Heart left ventricle (tissue), 16 donors: ENCODE measurements at regions of chr12 and their contacts with region 1.

Region 1: DNA sequence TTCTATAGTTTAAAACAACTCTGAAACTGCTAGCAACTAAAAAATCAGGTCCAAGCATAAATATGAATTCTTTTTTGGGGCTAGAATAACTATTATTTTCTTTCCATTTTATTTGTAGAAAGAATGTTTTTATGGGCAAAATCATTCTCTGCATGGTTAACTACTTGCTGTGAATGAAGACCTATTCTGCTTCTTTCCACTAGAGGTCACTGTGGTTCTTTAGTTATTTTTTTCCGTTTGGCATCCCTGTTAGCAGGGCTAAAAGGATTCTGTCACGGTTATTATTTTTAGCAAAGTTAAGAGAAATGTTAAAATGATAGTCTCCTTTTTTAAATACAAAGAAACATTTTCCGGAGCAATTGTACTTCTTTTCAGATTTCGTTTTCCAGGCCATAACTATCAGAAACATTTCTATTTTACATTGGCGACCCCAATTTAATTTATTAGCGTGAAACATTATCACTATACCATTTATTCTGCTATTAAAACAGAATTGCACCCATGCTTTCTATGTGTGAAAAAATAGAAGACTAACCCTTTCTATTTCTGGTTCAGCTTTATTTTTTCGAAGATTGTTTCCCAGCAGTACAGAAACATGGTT is 404.8 kb downstream of the ATP23 start:
- DNase-seq: no peak
- ATAC-seq: peak in 1 of 4 donors; percentile 62
- H3K4me3 ChIP-seq: no peak overlapping the region
- H3K27ac ChIP-seq: no peak overlapping the region
- H3K4me1 ChIP-seq: peaks cover 0 to 5% (median 0%) of the 10 kb centered on the region in 12 donors
- H3K27me3 ChIP-seq: no peaks in the 10 kb centered on the region
- CTCF ChIP-seq: peak; percentile 74 to 91 (median 84)
- POLR2A ChIP-seq: no peak

Region 2: GRCh38 chr12:57993025-57993424 is 353.1 kb before region 1 on chr12:
- intact Hi-C with region 1: loop called in 3 of 10 experiments (anchors 5 to 10 kb)
- DNase-seq: no peak
- ATAC-seq: no peak
- H3K4me3 ChIP-seq: no peak overlapping the region
- H3K27ac ChIP-seq: no peak overlapping the region
- H3K4me1 ChIP-seq: no peaks in the 10 kb centered on the region
- H3K27me3 ChIP-seq: no peaks in the 10 kb centered on the region
- CTCF ChIP-seq: peak in 5 of 12 donors; percentile 8 to 37 (median 28)
- POLR2A ChIP-seq: no peak

Region 3: DNA sequence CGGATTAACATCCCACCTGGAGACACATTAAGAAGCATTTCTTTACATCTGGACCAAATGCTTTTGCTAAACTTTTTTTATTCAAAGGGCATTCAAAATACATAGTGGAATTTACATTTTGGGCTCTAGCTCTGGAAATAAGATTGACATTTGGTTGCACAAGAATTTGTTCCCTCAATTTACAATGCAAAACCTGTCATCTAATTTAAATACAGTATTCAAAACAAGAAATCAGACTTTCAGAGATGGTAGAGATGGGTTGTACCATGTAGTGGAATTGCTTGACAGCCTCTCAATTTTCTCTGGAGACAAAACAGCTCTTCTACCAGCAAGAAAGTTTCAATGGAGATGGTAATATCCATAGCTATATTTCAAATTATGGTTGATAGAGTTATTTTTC is 129.0 kb before region 1 on chr12:
- intact Hi-C with region 1: no loop called
- DNase-seq: no peak
- ATAC-seq: no peak
- H3K4me3 ChIP-seq: no peak overlapping the region
- H3K27ac ChIP-seq: no peak overlapping the region
- H3K4me1 ChIP-seq: no peaks in the 10 kb centered on the region
- H3K27me3 ChIP-seq: no peaks in the 10 kb centered on the region
- CTCF ChIP-seq: no peak
- POLR2A ChIP-seq: no peak

Region 4: GRCh38 chr12:58378028-58378427 is 31.9 kb after region 1 on chr12:
- intact Hi-C with region 1: no loop called
- DNase-seq: no peak
- ATAC-seq: no peak
- H3K4me3 ChIP-seq: no peak overlapping the region
- H3K27ac ChIP-seq: no peak overlapping the region
- H3K4me1 ChIP-seq: no peaks in the 10 kb centered on the region
- H3K27me3 ChIP-seq: no peaks in the 10 kb centered on the region
- CTCF ChIP-seq: no peak
- POLR2A ChIP-seq: no peak

Region 5: GRCh38 chr12:58529897-58530741 is 184.0 kb after region 1 on chr12:
- intact Hi-C with region 1: loop called in 1 of 10 experiments (anchors 10 kb)
- DNase-seq: no peak
- ATAC-seq: peak in 1 of 4 donors; percentile 77
- H3K4me3 ChIP-seq: no peak overlapping the region
- H3K27ac ChIP-seq: no peak overlapping the region
- H3K4me1 ChIP-seq: peaks cover 0 to 6% (median 0%) of the 10 kb centered on the region in 12 donors
- H3K27me3 ChIP-seq: no peaks in the 10 kb centered on the region
- CTCF ChIP-seq: no peak
- POLR2A ChIP-seq: no peak

Region 6: GRCh38 chr12:58781609-58782008 is 435.5 kb after region 1 on chr12:
- intact Hi-C with region 1: no loop called
- DNase-seq: no peak
- ATAC-seq: peak in 3 of 4 donors; percentile 38 to 68 (median 62)
- H3K4me3 ChIP-seq: peak overlapping the region in 4 of 12 donors; percentile 1 to 17 (median 4)
- H3K27ac ChIP-seq: no peak overlapping the region
- H3K4me1 ChIP-seq: no peaks in the 10 kb centered on the region
- H3K27me3 ChIP-seq: no peaks in the 10 kb centered on the region
- CTCF ChIP-seq: no peak
- POLR2A ChIP-seq: no peak

Region 7: GRCh38 chr12:59087077-59087673 is 741.0 kb after region 1 on chr12:
- intact Hi-C with region 1: loop called in 4 of 10 experiments (anchors 5 to 10 kb)
- DNase-seq: no peak
- ATAC-seq: no peak
- H3K4me3 ChIP-seq: no peak overlapping the region
- H3K27ac ChIP-seq: no peak overlapping the region
- H3K4me1 ChIP-seq: no peaks in the 10 kb centered on the region
- H3K27me3 ChIP-seq: no peaks in the 10 kb centered on the region
- CTCF ChIP-seq: peak in 9 of 12 donors; percentile 27 to 56 (median 38)
- POLR2A ChIP-seq: no peak

Region 8: GRCh38 chr12:59149997-59150642 is 804.0 kb after region 1 on chr12:
- intact Hi-C with region 1: loop called (anchors 1 to 5 kb)
- DNase-seq: peak in 1 of 5 donors; percentile 16
- ATAC-seq: peak in 3 of 4 donors; percentile 89 to 94 (median 90)
- H3K4me3 ChIP-seq: no peak overlapping the region
- H3K27ac ChIP-seq: no peak overlapping the region
- H3K4me1 ChIP-seq: no peaks in the 10 kb centered on the region
- H3K27me3 ChIP-seq: no peaks in the 10 kb centered on the region
- CTCF ChIP-seq: peak; percentile 83 to 98 (median 95)
- POLR2A ChIP-seq: no peak